ENCODE measurements at regions of chr14 and their contacts with region 1.

Region 1: DNA sequence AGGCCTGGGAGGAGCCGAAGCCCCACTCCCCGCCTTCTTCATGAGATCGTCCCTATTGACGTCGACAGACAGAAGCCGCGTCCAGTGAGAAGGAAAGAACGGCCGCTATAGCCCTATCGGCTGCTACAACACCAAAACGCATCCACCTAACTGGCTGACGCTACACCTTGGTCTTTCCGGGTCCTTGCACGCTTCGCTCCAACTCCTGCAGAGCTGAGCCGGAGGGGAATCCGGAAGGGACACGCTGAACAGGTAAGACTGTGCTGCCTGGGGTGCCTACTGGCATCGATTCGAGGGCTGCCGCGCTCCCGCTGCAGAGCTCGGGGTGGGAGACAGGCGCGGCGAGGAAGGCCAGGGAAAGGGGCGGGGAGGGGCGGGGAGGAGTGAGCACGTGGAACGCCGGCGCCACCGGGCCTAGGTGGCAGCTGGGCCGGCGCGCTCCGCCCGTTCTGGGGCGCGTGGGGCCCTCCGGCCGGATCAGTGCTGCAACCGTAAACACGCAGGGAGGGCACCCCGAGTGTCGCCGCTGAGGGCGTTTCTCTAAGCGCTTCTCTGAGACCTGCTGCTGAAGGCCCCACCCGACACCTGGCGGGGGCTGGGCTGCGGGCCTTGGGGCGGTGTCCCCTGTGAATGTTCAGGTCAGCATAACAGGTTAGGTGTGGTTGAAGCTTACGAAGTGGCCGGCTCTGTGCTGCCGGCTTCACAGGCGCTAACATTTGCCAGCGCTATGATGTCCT is at the start of gene DCAF4:
- DNase-seq: peak; percentile 97
- H3K4me3 Mint-ChIP-seq: peak within 1 kb of the TSS; percentile 96
- H3K27ac Mint-ChIP-seq: peak within 1 kb of the TSS; percentile 83
- H3K4me1 Mint-ChIP-seq: peaks cover 9% of the 10 kb centered on the region
- H3K27me3 Mint-ChIP-seq: peaks cover 20% of the 10 kb centered on the region
- total RNA-seq, gene DCAF4: 13.6 to 15.6 TPM

Region 2: GRCh38 chr14:72948481-72949138 is 22.1 kb after region 1 on chr14:
- CTCF ChIA-PET with region 1: interaction called, 10 read pairs
- POLR2A ChIA-PET with region 1: no interaction called
- DNase-seq: peak; percentile 75
- H3K4me3 Mint-ChIP-seq: no peak overlapping the region
- H3K27ac Mint-ChIP-seq: no peak overlapping the region
- H3K4me1 Mint-ChIP-seq: peaks cover 19% of the 10 kb centered on the region
- H3K27me3 Mint-ChIP-seq: no peaks in the 10 kb centered on the region

Measured in activated CD4-positive, alpha-beta memory T cell treated with anti-CD3 and anti-CD28 coated beads, Interleukin-2, amount 10 ng/mL, durations not matched to agents 7 days and 5 days (primary cell).